ENCODE measurements at regions of chr12 and their contacts with region 1.

Region 1: GRCh38 chr12:21296751-21297406 is 37.8 kb downstream of the SLCO1A2 start:
- DNase-seq: peak in 4 of 5 donors; percentile 3 to 15 (median 14)
- H3K4me3 ChIP-seq: no peak overlapping the region
- H3K4me3 Mint-ChIP-seq: no peak overlapping the region
- H3K27ac ChIP-seq: no peak overlapping the region
- H3K27ac Mint-ChIP-seq: no peak overlapping the region
- H3K4me1 ChIP-seq: no peaks in the 10 kb centered on the region
- H3K4me1 Mint-ChIP-seq: peaks cover 0 to 11% (median 3%) of the 10 kb centered on the region in 4 donors
- H3K27me3 ChIP-seq: no peaks in the 10 kb centered on the region
- H3K27me3 Mint-ChIP-seq: peaks cover 0 to 3% of the 10 kb centered on the region in 2 donors

Region 2: DNA sequence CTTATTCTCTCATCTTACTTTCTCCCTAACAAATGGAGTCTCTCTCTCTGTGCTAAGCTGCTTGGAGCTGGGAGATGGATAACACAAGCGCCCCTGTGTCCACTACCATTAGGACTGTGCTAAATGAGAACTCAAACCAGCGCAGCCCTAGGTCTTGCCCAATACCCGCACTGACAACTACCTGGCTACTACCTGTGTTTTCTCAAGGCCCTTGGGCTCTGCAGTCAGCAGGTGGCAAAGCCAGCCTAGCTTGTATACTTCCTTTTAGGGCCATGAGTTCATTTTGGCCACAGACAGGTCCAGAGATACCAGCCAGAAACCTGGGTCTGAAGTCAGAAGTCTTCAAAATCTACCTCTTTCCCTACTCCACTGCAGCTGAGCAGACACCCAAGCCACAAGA is 178.9 kb before region 1 on chr12:
- CTCF ChIA-PET with region 1: no interaction called
- POLR2A ChIA-PET with region 1: no interaction called
- intact Hi-C with region 1: no loop called
- DNase-seq: no peak
- H3K4me3 ChIP-seq: no peak overlapping the region
- H3K4me3 Mint-ChIP-seq: no peak overlapping the region
- H3K27ac ChIP-seq: no peak overlapping the region
- H3K27ac Mint-ChIP-seq: no peak overlapping the region
- H3K4me1 ChIP-seq: no peaks in the 10 kb centered on the region
- H3K4me1 Mint-ChIP-seq: no peaks in the 10 kb centered on the region
- H3K27me3 ChIP-seq: no peaks in the 10 kb centered on the region
- H3K27me3 Mint-ChIP-seq: no peaks in the 10 kb centered on the region

Region 3: DNA sequence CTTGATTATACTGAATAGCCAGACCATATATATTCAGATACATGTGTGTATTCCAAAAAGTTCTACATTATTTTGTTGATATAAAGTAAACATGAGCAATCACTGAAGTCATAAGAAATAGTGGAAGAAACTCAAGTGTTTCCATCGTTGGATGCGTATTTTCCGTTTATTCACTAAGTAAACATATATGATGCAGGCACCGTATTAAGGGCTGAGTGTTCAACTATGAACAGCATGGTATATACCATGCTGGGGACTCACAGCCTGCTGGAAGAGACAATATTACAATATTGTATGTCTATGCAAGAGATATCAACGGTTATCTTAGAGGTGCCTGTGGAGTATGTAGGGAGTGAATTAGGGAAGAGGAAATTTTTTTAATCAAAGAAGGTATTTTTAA is 141.8 kb after region 1 on chr12:
- CTCF ChIA-PET with region 1: no interaction called
- POLR2A ChIA-PET with region 1: interaction called, 3 read pairs
- intact Hi-C with region 1: loop called (anchors 5 kb)
- DNase-seq: no peak
- H3K4me3 ChIP-seq: peak overlapping the region; percentile 92 to 94
- H3K4me3 Mint-ChIP-seq: peak overlapping the region; percentile 97 to 100 (median 98)
- H3K27ac ChIP-seq: peak overlapping the region; percentile 81
- H3K27ac Mint-ChIP-seq: peak overlapping the region; percentile 97 to 99 (median 98)
- H3K4me1 ChIP-seq: peaks cover 53% of the 10 kb centered on the region
- H3K4me1 Mint-ChIP-seq: peaks cover 27 to 66% (median 46%) of the 10 kb centered on the region in 4 donors
- H3K27me3 ChIP-seq: no peaks in the 10 kb centered on the region
- H3K27me3 Mint-ChIP-seq: no peaks in the 10 kb centered on the region

Region 4: DNA sequence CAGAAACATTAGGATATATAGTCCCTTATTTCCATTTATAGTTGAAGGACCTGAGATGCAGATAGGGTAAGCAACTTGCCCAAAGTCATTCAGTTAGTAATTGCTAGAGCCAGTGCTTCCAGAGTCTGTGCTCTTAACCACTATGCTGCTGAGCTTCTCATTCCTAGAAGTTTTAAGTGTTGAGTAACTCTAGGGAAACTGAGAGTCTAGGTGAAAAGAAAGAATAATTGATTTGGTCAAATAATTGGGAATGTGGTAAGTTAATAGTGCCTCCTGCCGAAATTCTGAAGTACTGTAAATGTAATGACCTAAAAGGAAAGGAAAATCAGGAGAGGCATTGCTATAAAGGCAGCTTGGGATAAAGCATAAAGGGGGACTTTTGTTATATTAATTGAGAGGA is 154.7 kb after region 1 on chr12:
- CTCF ChIA-PET with region 1: interaction called, 3 read pairs
- POLR2A ChIA-PET with region 1: no interaction called
- intact Hi-C with region 1: loop called (anchors 1 kb)
- DNase-seq: no peak
- H3K4me3 ChIP-seq: no peak overlapping the region
- H3K4me3 Mint-ChIP-seq: peak overlapping the region in 1 of 8 donors; percentile 53
- H3K27ac ChIP-seq: no peak overlapping the region
- H3K27ac Mint-ChIP-seq: peak overlapping the region in 5 of 7 donors; percentile 2 to 88 (median 67)
- H3K4me1 ChIP-seq: peaks cover 40% of the 10 kb centered on the region
- H3K4me1 Mint-ChIP-seq: peaks cover 27 to 43% (median 37%) of the 10 kb centered on the region in 4 donors
- H3K27me3 ChIP-seq: no peaks in the 10 kb centered on the region
- H3K27me3 Mint-ChIP-seq: no peaks in the 10 kb centered on the region

Region 5: DNA sequence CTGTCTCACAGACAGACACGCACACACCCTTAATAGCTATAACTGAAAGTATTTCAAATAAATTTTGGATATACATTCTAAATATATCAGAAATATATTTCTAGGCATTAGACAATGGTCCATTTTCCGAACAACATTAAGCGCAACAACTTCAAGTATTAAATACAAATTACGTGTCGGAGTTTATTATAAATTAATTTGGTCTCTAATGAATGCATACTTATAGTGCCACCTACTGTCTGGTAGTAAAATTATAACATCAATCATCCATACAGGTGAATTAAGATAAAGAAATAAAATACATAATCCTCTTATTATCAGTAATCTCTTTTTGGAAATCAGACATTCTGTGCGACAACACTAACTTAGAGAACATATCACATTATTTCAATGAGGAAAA is 722.0 kb after region 1 on chr12:
- CTCF ChIA-PET with region 1: interaction called, 4 read pairs
- POLR2A ChIA-PET with region 1: no interaction called
- intact Hi-C with region 1: loop called (anchors 1 kb)
- DNase-seq: peak in 4 of 5 donors; percentile 15 to 30 (median 23)
- H3K4me3 ChIP-seq: no peak overlapping the region
- H3K4me3 Mint-ChIP-seq: no peak overlapping the region
- H3K27ac ChIP-seq: no peak overlapping the region
- H3K27ac Mint-ChIP-seq: no peak overlapping the region
- H3K4me1 ChIP-seq: no peaks in the 10 kb centered on the region
- H3K4me1 Mint-ChIP-seq: no peaks in the 10 kb centered on the region
- H3K27me3 ChIP-seq: no peaks in the 10 kb centered on the region
- H3K27me3 Mint-ChIP-seq: peaks cover 3 to 10% of the 10 kb centered on the region in 2 donors